ENCODE measurements at regions of chr17 and their contacts with region 1.

Region 1: DNA sequence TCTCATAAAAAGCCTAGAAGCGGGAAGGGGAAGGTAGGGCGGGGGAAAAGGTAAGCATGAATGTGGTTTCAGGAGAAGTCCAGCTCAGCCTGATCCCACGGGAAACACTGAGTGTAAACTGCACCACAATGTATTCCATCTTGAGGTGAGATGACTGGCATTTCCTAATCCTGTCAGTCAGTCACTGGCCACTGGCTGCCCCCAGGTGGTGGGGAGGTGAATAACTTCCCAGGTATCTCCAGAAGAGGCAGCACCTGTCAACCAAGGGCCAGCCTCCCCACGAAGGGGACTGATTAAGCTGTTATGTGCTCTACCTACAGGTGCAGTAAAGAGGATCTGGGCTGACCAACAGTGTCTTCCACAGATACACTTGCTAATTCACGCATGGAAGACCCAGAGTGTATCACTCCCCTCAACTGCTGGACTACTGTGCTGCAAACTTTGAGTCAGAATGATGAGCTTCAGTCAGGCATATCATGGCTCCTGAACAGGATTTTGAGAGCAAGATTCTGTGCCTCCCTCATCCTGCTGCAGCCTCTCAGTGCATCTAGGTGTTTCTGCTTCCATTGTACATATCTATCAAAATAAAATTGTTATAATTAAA is 108.5 kb upstream of the CCL2 start:
- DNase-seq: no peak
- ATAC-seq: no peak
- H3K4me3 ChIP-seq: no peak overlapping the region
- H3K27ac ChIP-seq: no peak overlapping the region
- H3K4me1 ChIP-seq: no peaks in the 10 kb centered on the region
- H3K27me3 ChIP-seq: peaks cover 0 to 13% (median 2%) of the 10 kb centered on the region in 3 donors
- CTCF ChIP-seq: peak; percentile 11

Region 2: DNA sequence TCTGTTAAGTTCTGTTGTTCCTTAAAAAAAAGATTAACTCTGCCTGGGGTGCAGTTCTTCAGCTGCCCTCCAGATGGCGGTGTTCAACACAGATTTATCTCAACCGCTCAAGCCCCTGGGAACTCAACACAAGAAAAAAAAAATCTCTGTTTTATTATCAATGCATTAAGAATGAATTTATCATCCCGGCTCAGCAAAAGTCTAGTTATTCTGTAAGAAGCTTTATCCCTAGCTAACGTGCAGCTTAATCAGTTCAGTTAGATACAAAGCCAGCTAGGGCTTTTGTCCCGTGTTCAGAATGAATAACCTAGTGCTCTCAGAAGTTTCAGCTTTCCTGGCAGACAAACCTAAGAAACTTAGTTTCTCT is 367.3 kb before region 1 on chr17:
- intact Hi-C with region 1: loop called in 1 of 2 experiments (anchors 5 kb)
- DNase-seq: peak in 1 of 2 donors; percentile 21
- ATAC-seq: peak in 1 of 4 donors; percentile 54
- H3K4me3 ChIP-seq: no peak overlapping the region
- H3K27ac ChIP-seq: no peak overlapping the region
- H3K4me1 ChIP-seq: no peaks in the 10 kb centered on the region
- H3K27me3 ChIP-seq: peaks cover 0 to 3% (median 0%) of the 10 kb centered on the region in 3 donors
- CTCF ChIP-seq: peak; percentile 88

Region 3: GRCh38 chr17:33927732-33928133 is 218.8 kb before region 1 on chr17:
- intact Hi-C with region 1: loop called in 1 of 2 experiments (anchors 10 kb)
- DNase-seq: no peak
- ATAC-seq: no peak
- H3K4me3 ChIP-seq: no peak overlapping the region
- H3K27ac ChIP-seq: no peak overlapping the region
- H3K4me1 ChIP-seq: no peaks in the 10 kb centered on the region
- H3K27me3 ChIP-seq: peaks cover 0 to 6% (median 0%) of the 10 kb centered on the region in 3 donors
- CTCF ChIP-seq: no peak

Region 4: GRCh38 chr17:34051046-34051445 is 95.5 kb before region 1 on chr17:
- intact Hi-C with region 1: no loop called
- DNase-seq: no peak
- ATAC-seq: no peak
- H3K4me3 ChIP-seq: no peak overlapping the region
- H3K27ac ChIP-seq: no peak overlapping the region
- H3K4me1 ChIP-seq: no peaks in the 10 kb centered on the region
- H3K27me3 ChIP-seq: peaks cover 2 to 10% (median 4%) of the 10 kb centered on the region in 3 donors
- CTCF ChIP-seq: no peak

Region 5: GRCh38 chr17:34318474-34318873 is 171.9 kb after region 1 on chr17:
- intact Hi-C with region 1: no loop called
- DNase-seq: no peak
- ATAC-seq: no peak
- H3K4me3 ChIP-seq: no peak overlapping the region
- H3K27ac ChIP-seq: no peak overlapping the region
- H3K4me1 ChIP-seq: no peaks in the 10 kb centered on the region
- H3K27me3 ChIP-seq: no peaks in the 10 kb centered on the region
- CTCF ChIP-seq: no peak

Measured in psoas muscle (tissue), 8 donors.